ENCODE measurements at regions of chr17 and their contacts with region 1.

Region 1: DNA sequence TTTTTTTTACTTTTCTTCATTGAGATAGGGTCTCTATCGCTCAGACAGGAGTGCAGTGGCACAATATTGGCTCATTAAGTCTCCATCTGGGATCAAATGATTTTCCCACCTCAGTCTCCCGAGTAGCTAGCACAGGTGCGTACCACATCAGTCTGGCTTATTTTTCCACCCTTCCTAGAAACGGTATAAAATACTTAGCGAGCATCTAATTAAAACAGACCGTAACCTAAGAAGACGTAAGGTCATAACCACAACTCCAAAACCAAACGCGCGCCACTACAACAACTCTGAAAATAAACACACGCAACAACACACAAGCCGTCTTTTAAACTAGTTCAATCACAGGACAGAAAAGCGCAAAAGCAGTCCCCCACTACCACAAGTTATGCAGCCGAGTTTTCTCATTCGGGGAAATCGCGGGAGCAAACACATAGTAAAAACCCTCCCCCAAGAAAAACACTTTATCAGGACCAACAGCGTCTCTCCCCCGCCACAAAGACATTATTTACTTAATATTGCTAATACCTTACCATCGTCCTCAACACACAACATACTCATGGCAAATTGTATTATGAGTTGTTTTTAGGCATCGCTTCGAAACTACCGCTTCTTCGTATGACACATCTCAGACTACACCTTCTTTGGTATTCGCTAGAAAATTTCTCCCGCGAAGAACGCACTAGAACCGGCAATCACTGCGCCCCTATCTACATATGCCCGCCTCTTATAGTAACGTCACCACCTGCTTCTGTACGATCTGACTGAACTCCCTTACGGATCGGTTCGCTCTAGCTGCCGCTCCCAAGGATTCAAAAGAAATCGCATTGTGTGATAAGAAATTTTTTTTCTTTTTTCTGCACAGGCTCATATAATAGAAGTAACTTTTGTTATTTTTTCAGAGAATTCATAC is 32.8 kb downstream of the TEX14 start:
- DNase-seq: peak; percentile 100
- ATAC-seq: peak; percentile 86
- H3K4me3 ChIP-seq: peak overlapping the region; percentile 33 to 34
- H3K27ac ChIP-seq: peak overlapping the region; percentile 69
- H3K4me1 ChIP-seq: peaks cover 15 to 22% of the 10 kb centered on the region in 2 experiments
- H3K27me3 ChIP-seq: no peaks in the 10 kb centered on the region
- CTCF ChIP-seq: no peak
- POLR2A ChIP-seq: peak; percentile 100
- RAD21 ChIP-seq: peak; percentile 55

Region 2: DNA sequence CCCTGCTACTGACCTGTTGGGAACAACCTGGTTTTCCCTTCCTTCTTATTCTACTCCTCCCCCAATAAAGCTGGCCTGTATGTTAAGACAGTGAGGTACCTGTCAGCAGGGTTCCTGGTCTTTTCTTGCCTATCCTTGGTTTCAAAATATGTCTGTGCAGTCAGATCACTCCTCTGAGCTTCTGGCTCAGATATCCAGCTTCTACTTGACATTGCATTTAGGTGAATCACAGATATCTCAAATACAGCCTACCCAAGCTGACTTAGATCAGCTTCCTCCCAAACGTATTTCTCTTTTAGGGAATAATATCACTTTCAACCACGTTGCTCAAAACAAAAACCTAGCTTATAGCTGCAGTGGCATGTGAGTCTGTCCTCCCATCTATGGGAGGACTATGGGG is 15.9 kb before region 1 on chr17:
- CTCF ChIA-PET with region 1: no interaction called
- POLR2A ChIA-PET with region 1: interaction called, 24 read pairs
- RAD21 ChIA-PET with region 1: no interaction called
- intact Hi-C with region 1: no loop called
- DNase-seq: no peak
- ATAC-seq: no peak
- H3K4me3 ChIP-seq: no peak overlapping the region
- H3K27ac ChIP-seq: no peak overlapping the region
- H3K4me1 ChIP-seq: peaks cover 0 to 19% of the 10 kb centered on the region in 2 experiments; a peak in 2 of 4 replicates
- H3K27me3 ChIP-seq: no peaks in the 10 kb centered on the region
- CTCF ChIP-seq: no peak
- POLR2A ChIP-seq: no peak
- RAD21 ChIP-seq: no peak

Region 3: GRCh38 chr17:58648236-58648806 is 10.7 kb before region 1 on chr17:
- CTCF ChIA-PET with region 1: no interaction called
- POLR2A ChIA-PET with region 1: interaction called, 24 read pairs
- RAD21 ChIA-PET with region 1: no interaction called
- intact Hi-C with region 1: no loop called
- DNase-seq: no peak
- ATAC-seq: peak; percentile 39; the same call in 1 of the 2 replicates
- H3K4me3 ChIP-seq: no peak overlapping the region
- H3K27ac ChIP-seq: no peak overlapping the region
- H3K4me1 ChIP-seq: peaks cover 0 to 18% of the 10 kb centered on the region in 2 experiments; a peak in 2 of 4 replicates
- H3K27me3 ChIP-seq: no peaks in the 10 kb centered on the region
- CTCF ChIP-seq: no peak
- POLR2A ChIP-seq: no peak
- RAD21 ChIP-seq: no peak

Region 4: GRCh38 chr17:58679263-58680037 is 20.4 kb after region 1 on chr17:
- CTCF ChIA-PET with region 1: no interaction called
- POLR2A ChIA-PET with region 1: interaction called, 83 read pairs
- RAD21 ChIA-PET with region 1: no interaction called
- intact Hi-C with region 1: loop called (anchors 1 kb)
- DNase-seq: peak; percentile 100
- ATAC-seq: peak; percentile 90
- H3K4me3 ChIP-seq: no peak overlapping the region
- H3K27ac ChIP-seq: no peak overlapping the region
- H3K4me1 ChIP-seq: peaks cover 0 to 20% of the 10 kb centered on the region in 2 experiments; a peak in 2 of 4 replicates
- H3K27me3 ChIP-seq: no peaks in the 10 kb centered on the region
- CTCF ChIP-seq: peak in 2 of 3 experiments; percentile 4 to 34; a peak in 2 of 6 replicates
- POLR2A ChIP-seq: peak; percentile 100
- RAD21 ChIP-seq: 0 out of 2 replicates have a peak, but pooled peaks have one; percentile 38

Region 5: GRCh38 chr17:58692239-58693055 is 33.4 kb after region 1 on chr17 and contains the start of gene RAD51C:
- CTCF ChIA-PET with region 1: interaction called, 3 read pairs
- POLR2A ChIA-PET with region 1: interaction called, 10 read pairs
- RAD21 ChIA-PET with region 1: no interaction called
- intact Hi-C with region 1: no loop called
- DNase-seq: peak; percentile 93
- ATAC-seq: peak; percentile 98
- H3K4me3 ChIP-seq: peak within 1 kb of the TSS; percentile 59 to 77
- H3K27ac ChIP-seq: peak within 1 kb of the TSS; percentile 69
- H3K4me1 ChIP-seq: peaks cover 13 to 18% of the 10 kb centered on the region in 2 experiments; a peak in 3 of 4 replicates
- H3K27me3 ChIP-seq: no peaks in the 10 kb centered on the region
- CTCF ChIP-seq: no peak
- POLR2A ChIP-seq: peak; percentile 97
- RAD21 ChIP-seq: peak; percentile 27
- total RNA-seq, gene RAD51C: 94.9 TPM

Measured in HCT116 (cell line).